Dendritic cell treated with granulocyte-macrophage colony-stimulating factor and Interleukin-4, amounts not matched to agents 40 ng/mL and 50 ng/mL, for 4 days (primary cell): ENCODE measurements at regions of chr10 and their contacts with region 1.

Region 1: DNA sequence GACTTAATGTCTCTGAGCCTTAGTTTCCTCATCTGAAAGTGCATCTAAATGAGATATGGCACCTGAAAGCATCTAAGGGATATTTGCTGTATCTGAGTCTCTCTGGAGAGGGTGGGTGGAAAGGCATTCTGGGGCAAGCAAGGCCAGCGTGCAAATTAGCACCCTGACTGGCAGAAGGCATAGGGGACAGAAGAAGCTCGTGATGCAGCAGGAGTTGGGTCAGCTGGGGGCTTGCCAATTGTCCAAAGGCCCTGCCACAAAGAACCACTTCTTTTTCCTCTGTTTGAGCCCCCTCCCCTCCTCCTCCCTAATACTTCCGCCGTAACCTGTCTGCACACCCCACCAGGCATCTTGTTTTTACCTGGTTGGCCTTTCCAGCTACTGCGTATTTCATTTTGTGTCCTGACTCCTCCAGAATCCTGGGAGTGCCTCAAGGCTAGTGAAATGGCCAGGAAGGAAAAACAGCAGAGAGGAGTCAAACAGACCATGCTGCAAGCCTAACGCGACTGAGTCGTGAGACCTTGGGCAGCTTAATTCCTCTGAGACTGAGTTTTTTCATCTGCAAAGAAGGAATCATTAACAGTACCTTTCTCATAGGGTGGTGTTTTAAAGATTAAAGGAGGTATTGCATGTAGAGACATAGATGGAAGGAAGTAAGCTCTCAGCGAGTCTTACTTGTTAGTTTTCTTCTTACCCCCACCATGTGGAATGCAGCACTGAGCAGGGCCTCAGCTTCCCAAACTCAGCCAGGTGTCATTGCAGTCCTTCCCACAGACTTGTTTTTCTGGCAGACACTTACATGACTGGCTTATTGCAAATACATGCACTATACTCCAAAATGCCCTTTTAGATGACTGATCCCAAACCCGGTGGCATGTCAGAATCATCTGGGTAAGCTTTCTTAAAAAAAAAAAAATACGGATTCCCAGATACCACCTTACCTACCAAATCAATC is 49.1 kb upstream of the MXI1 start:
- H3K4me3 Mint-ChIP-seq: no peak overlapping the region
- H3K27ac Mint-ChIP-seq: no peak overlapping the region
- H3K4me1 Mint-ChIP-seq: peaks cover 48% of the 10 kb centered on the region
- H3K27me3 Mint-ChIP-seq: peaks cover 8% of the 10 kb centered on the region

Region 2: DNA sequence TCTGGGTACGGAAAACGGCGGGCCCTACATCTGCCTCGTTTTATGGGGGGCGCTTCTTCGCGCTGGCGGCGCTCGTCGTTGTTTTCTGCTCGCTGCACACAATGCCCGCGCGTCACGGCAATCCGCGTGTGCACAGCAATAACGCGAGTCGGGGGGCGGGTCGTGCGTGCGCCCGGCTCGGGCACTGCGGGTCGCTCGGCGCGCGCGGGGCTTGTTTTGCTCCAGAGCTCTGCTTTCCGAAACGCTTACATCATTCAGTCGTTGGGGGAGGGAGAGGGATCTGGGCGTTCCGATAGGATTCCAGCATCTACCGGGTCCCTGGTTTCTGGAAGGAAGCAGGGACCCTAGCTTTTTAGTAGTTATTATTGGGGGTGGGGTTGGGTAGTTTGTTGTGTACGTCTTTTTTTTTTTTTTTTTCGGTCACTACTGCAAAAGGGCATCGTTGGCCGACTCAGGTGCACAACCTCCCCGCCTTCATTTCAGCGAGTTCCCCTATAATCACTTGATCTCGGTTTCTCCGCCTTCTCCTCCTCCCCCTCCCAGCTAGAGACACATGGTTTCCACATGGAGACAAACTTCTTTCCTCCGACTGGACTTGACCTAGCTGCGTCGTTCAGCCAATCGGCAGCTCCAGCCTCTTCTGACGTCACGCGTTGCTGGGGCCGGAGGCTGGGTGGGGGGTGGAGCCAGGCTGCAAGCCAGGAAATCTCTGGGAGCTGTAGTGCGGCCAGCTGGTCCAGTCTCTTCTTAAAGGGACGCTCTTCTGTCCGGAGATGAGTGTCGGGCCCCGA is 52.5 kb after region 1 on chr10:
- intact Hi-C with region 1: loop called (anchors 5 kb)
- H3K4me3 Mint-ChIP-seq: peak overlapping the region; percentile 95
- H3K27ac Mint-ChIP-seq: peak overlapping the region; percentile 92
- H3K4me1 Mint-ChIP-seq: peaks cover 69% of the 10 kb centered on the region
- H3K27me3 Mint-ChIP-seq: peaks cover 13% of the 10 kb centered on the region